Body of pancreas (tissue), 4 donors: ENCODE measurements at regions of chr6 and their contacts with region 1.

Region 1: DNA sequence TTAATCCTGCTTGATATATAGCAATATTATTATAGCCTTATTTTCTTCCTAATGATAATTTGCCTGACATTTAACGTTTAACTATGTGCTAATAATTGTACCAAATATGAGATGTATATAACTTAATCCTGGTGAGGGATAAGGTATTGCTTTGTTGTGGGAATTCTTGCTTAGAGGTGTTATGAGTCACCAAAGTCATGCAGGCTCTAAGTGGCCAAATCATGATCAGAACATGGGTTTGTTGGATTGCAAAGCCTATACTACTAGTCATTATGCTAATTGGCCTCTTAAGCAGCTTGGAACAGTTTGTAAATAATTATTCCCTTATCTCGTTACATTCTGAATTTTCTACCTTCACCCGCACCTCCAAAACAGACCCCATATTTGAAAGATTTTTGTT is 21.9 kb upstream of the C6orf141 start:
- DNase-seq: no peak
- ATAC-seq: no peak
- H3K4me3 ChIP-seq: no peak overlapping the region
- H3K27ac ChIP-seq: no peak overlapping the region
- H3K4me1 ChIP-seq: peaks cover 16% of the 10 kb centered on the region
- H3K27me3 ChIP-seq: no peaks in the 10 kb centered on the region
- CTCF ChIP-seq: no peak
- POLR2A ChIP-seq: no peak

Region 2: DNA sequence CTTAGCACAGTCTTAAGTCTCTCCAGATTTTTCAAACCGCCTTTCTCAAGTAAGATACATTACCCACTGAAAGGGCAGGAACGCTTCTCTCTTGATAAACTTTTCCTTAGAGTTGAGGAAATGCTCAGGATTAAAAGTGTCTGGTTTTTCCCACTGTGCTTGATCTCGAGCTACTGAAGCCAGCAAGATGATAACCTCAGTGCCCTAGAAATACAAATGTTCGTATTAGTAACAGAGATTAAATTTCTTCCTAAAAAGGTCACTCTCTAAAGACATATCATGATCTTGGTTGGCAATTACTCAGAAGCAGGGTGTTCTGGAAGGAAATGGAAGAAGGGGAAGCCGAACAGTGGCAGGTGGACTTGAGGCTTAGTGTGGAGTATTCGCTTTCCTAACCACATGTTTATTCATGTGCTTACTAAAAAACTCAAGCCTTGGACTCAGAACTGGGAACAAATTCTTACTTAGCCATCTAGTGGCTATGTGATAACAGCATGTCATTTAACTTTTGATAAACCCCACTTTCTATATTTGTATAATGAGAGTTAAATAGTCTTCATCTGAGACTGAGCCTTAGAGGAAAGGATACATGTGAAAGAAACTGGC is 42.0 kb after region 1 on chr6:
- intact Hi-C with region 1: no loop called
- DNase-seq: no peak
- ATAC-seq: peak; percentile 72
- H3K4me3 ChIP-seq: no peak overlapping the region
- H3K27ac ChIP-seq: no peak overlapping the region
- H3K4me1 ChIP-seq: peaks cover 8% of the 10 kb centered on the region
- H3K27me3 ChIP-seq: no peaks in the 10 kb centered on the region
- CTCF ChIP-seq: peak in 4 of 7 experiments; percentile 25 to 33 (median 30)
- POLR2A ChIP-seq: no peak

Region 3: GRCh38 chr6:49606696-49607390 is 78.3 kb after region 1 on chr6:
- intact Hi-C with region 1: loop called (anchors 5 kb)
- DNase-seq: peak; percentile 18 to 54 (median 45)
- ATAC-seq: peak; percentile 89
- H3K4me3 ChIP-seq: no peak overlapping the region
- H3K27ac ChIP-seq: no peak overlapping the region
- H3K4me1 ChIP-seq: no peaks in the 10 kb centered on the region
- H3K27me3 ChIP-seq: no peaks in the 10 kb centered on the region
- CTCF ChIP-seq: peak; percentile 71 to 93 (median 87)
- POLR2A ChIP-seq: no peak